CD4-positive, alpha-beta memory T cell (primary cell): ENCODE measurements at regions of chr21 and their contacts with region 1.

Region 1: DNA sequence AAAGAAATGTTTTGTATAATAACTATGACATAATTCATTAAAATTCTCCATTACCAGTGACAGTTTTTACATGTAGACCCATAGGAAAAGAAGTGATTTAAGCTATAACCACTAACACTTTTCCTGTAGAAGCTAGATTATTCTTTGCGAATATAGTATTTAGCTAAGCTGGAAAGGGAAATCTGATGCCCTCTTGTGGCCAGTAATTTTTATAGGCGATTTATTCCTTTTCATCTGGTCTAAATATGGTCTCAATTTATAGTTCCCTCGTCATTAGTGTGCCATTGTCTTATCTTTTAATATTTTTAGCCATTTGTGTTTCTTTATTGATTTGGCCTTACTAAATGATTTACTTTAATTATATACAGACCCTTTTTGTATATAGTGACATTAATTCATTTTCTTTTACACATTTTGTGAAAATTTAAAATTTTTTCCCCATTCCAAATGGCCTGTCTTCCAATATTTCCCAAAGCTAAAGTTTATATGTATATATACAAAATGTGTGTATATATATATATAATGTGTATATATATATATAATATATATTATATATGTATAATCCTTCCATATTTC is 26.7 kb downstream of the BTG3 start:
- DNase-seq: peak in 4 of 5 donors; percentile 34 to 45 (median 40)
- H3K4me3 ChIP-seq: no peak overlapping the region
- H3K4me3 Mint-ChIP-seq: no peak overlapping the region
- H3K27ac ChIP-seq: no peak overlapping the region
- H3K27ac Mint-ChIP-seq: no peak overlapping the region
- H3K4me1 ChIP-seq: no peaks in the 10 kb centered on the region
- H3K4me1 Mint-ChIP-seq: no peaks in the 10 kb centered on the region
- H3K27me3 ChIP-seq: no peaks in the 10 kb centered on the region
- H3K27me3 Mint-ChIP-seq: no peaks in the 10 kb centered on the region

Region 2: GRCh38 chr21:17387030-17387617 is 198.8 kb before region 1 on chr21:
- CTCF ChIA-PET with region 1: interaction called, 144 read pairs
- POLR2A ChIA-PET with region 1: no interaction called
- intact Hi-C with region 1: loop called (anchors 1 kb)
- DNase-seq: peak in 4 of 5 donors; percentile 48 to 63 (median 60)
- H3K4me3 ChIP-seq: no peak overlapping the region
- H3K4me3 Mint-ChIP-seq: no peak overlapping the region
- H3K27ac ChIP-seq: no peak overlapping the region
- H3K27ac Mint-ChIP-seq: no peak overlapping the region
- H3K4me1 ChIP-seq: no peaks in the 10 kb centered on the region
- H3K4me1 Mint-ChIP-seq: no peaks in the 10 kb centered on the region
- H3K27me3 ChIP-seq: no peaks in the 10 kb centered on the region
- H3K27me3 Mint-ChIP-seq: peaks cover 2 to 5% of the 10 kb centered on the region in 2 donors

Region 3: DNA sequence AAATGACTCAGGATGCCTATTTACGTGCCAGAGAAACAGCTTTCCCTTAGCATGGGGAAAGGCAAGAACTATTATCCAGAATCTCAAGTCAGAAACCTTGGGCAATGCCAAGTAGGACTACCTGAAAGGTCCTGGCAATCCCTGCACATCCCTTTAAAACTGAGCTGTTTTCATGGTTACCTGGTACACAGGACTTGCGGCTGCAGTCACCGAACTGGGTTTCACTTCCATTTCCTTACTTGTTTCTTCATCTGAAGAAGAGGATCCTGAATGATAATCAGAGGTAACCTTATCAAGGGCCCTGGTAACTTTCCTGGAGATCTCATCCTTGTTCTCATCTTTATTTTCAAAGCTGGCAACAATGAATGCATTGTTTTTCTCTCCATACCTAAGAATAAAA is 12.5 kb after region 1 on chr21:
- CTCF ChIA-PET with region 1: interaction called, 10 read pairs
- POLR2A ChIA-PET with region 1: no interaction called
- intact Hi-C with region 1: no loop called
- DNase-seq: no peak
- H3K4me3 ChIP-seq: no peak overlapping the region
- H3K4me3 Mint-ChIP-seq: peak overlapping the region in 1 of 8 donors; percentile 3
- H3K27ac ChIP-seq: no peak overlapping the region
- H3K27ac Mint-ChIP-seq: peak overlapping the region in 1 of 7 donors; percentile 4
- H3K4me1 ChIP-seq: no peaks in the 10 kb centered on the region
- H3K4me1 Mint-ChIP-seq: peaks cover 0 to 10% (median 4%) of the 10 kb centered on the region in 4 donors
- H3K27me3 ChIP-seq: no peaks in the 10 kb centered on the region
- H3K27me3 Mint-ChIP-seq: no peaks in the 10 kb centered on the region

Region 4: DNA sequence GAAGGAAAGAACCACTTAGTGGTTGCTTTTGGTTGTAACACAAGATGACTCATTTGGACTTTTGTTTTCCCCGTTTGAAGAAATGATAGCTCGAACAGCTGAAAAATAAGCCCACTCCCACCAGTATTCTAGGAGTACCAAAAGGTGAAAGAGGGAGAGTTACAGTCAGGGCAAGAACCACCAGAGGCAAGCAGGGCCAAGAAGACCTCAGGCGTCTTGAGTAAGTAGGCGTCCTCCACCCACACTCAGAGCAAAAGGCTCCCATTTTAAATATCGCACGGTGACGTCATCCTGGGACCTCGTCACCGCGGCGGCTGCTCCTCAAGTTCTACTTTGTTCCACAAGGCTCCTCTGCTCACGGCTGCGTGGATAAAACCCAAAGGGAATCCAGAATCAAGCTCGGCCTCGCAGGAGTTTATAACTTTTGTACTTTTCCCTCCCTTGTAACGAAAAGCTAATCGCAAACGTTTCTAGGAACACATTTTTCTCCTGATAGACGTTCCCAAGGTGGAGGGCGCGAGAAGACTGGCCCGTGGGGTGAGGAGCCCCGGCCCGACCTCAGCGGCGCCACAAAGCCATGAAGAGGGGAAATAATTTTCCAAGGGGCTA is 25.6 kb after region 1 on chr21:
- CTCF ChIA-PET with region 1: interaction called, 23 read pairs
- POLR2A ChIA-PET with region 1: interaction called, 3 read pairs
- intact Hi-C with region 1: no loop called
- DNase-seq: peak; percentile 80 to 91 (median 84)
- H3K4me3 ChIP-seq: peak overlapping the region; percentile 87 to 97
- H3K4me3 Mint-ChIP-seq: peak overlapping the region; percentile 91 to 99 (median 95)
- H3K27ac ChIP-seq: peak overlapping the region; percentile 84
- H3K27ac Mint-ChIP-seq: peak overlapping the region; percentile 95 to 100 (median 99)
- H3K4me1 ChIP-seq: peaks cover 27% of the 10 kb centered on the region
- H3K4me1 Mint-ChIP-seq: peaks cover 17 to 50% (median 25%) of the 10 kb centered on the region in 4 donors
- H3K27me3 ChIP-seq: no peaks in the 10 kb centered on the region
- H3K27me3 Mint-ChIP-seq: no peaks in the 10 kb centered on the region